ENCODE measurements at regions of chr17 and their contacts with region 1.

Region 1: GRCh38 chr17:7561028-7561575 is 617 bp upstream of the SENP3 start:
- DNase-seq: peak; percentile 96
- H3K4me3 ChIP-seq: peak overlapping the region; percentile 71 to 91 (median 90)
- H3K27ac ChIP-seq: peak overlapping the region; percentile 74 to 98 (median 79)
- H3K4me1 ChIP-seq: peaks cover 40 to 59% of the 10 kb centered on the region in 2 donors
- H3K27me3 ChIP-seq: no peaks in the 10 kb centered on the region
- CTCF ChIP-seq: peak; percentile 72 to 95 (median 83)
- POLR2A ChIP-seq: no peak

Region 2: GRCh38 chr17:7351665-7352501 is 209.2 kb before region 1 on chr17 and contains the start of gene KCTD11:
- intact Hi-C with region 1: loop called (anchors 5 kb)
- DNase-seq: peak; percentile 93 to 94
- H3K4me3 ChIP-seq: peak within 1 kb of the TSS; percentile 43 to 97 (median 80)
- H3K27ac ChIP-seq: peak within 1 kb of the TSS; percentile 89 to 100 (median 97)
- H3K4me1 ChIP-seq: peaks cover 21 to 53% of the 10 kb centered on the region in 2 donors
- H3K27me3 ChIP-seq: no peaks in the 10 kb centered on the region
- CTCF ChIP-seq: peak in 3 of 6 experiments; percentile 30 to 55 (median 39)
- POLR2A ChIP-seq: peak in 1 of 2 donors; percentile 82
- total RNA-seq, gene KCTD11: 6.6 to 20.4 (median 18.7) TPM

Region 3: GRCh38 chr17:7394452-7395191 is 166.5 kb before region 1 on chr17 and contains the start of gene PLSCR3:
- intact Hi-C with region 1: no loop called
- DNase-seq: peak; percentile 86 to 89
- H3K4me3 ChIP-seq: peak within 1 kb of the TSS; percentile 65 to 79 (median 67)
- H3K27ac ChIP-seq: peak within 1 kb of the TSS; percentile 72 to 93 (median 92)
- H3K4me1 ChIP-seq: peaks cover 11 to 18% of the 10 kb centered on the region in 2 donors
- H3K27me3 ChIP-seq: no peaks in the 10 kb centered on the region
- CTCF ChIP-seq: peak in 5 of 6 experiments; percentile 20 to 46 (median 41)
- POLR2A ChIP-seq: peak in 1 of 2 donors; percentile 91
- total RNA-seq, gene PLSCR3: 18.3 to 21.6 (median 19.9) TPM

Region 4: GRCh38 chr17:7435221-7435675 is 125.9 kb before region 1 on chr17 and contains the start of gene TMEM102:
- intact Hi-C with region 1: loop called (anchors 5 kb)
- DNase-seq: peak; percentile 98 to 99
- H3K4me3 ChIP-seq: peak within 1 kb of the TSS; percentile 30 to 53 (median 38)
- H3K27ac ChIP-seq: peak within 1 kb of the TSS; percentile 25 to 64 (median 61)
- H3K4me1 ChIP-seq: peaks cover 31 to 42% of the 10 kb centered on the region in 2 donors
- H3K27me3 ChIP-seq: no peaks in the 10 kb centered on the region
- CTCF ChIP-seq: no peak
- POLR2A ChIP-seq: peak in 1 of 2 donors; percentile 63
- total RNA-seq, gene TMEM102: 11.3 to 19.4 (median 16.4) TPM

Region 5: DNA sequence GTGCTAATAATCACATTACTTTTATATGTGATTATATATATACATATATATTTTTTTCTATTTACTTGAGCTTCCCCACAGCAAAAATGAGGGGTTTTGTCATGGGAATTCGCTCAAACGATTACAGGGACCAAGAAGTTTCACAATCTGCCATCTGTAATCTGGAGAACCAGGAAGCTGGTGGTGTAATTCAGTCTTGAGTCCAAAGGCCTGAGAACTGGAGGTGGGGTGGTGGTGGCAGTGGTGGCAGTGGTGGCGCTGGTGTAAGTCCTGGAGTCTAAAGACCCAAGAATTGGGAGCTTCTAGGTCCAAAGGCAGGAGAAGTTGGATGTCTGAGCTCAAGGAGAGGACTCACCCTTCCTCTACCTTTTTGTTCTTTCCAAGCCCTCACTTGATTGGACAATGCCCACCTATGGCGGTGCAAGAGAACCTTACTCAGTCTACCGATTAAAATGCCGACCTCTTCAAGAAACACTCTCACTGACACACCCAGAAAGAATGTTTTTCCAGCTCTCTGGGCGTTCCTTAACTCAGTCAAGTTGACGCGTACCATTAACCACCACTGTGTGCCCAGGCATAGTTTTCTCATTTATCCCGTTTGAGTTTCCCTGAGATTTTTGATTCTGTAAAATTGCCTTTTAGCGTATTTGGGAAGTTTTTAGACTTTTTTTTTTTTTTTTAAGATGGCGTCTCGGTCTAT is 45.0 kb before region 1 on chr17:
- intact Hi-C with region 1: loop called (anchors 2 kb)
- DNase-seq: no peak
- H3K4me3 ChIP-seq: no peak overlapping the region
- H3K27ac ChIP-seq: no peak overlapping the region
- H3K4me1 ChIP-seq: no peaks in the 10 kb centered on the region
- H3K27me3 ChIP-seq: no peaks in the 10 kb centered on the region
- CTCF ChIP-seq: no peak
- POLR2A ChIP-seq: no peak

Region 6: DNA sequence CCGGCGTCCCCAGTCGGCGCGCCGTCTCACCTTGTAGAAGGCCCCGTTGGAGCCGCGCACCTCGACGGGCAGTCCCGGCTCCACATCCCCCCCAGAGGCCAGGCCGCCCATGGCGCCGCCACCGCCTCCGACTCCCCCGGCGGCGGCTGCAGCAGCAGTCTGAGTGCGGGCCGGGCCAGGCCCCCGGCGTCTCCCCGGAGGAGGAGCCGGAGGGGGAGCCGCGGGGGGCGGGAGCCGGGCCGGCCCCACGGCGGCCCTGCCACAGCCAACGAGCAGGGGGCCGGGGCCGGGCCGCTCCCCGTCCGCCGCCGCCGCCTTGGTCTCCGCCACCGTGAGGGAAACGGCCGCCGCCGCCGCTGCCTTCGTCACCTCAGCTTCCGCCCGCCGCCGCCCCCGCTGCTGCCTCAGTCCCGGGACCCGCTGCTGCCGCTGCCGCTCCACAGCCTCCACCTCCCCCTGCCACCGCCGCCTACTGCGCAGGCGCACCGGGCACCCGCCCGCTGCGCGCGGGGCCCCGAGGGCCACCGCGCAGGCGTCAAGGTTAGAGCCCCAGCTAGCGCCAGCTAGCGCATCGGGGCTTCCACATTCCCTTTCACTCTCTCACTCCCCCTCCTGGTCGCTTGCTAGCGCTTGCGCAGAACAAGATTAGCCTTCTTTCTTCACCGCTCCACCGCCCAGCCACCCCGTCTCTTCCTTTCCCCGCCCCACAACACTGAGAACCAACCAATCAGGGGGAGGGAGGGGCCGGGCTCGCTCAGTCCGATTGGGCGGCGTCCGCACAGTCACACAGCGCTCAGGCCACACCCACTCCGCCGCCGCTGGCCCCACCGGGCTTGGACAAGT is 53.5 kb after region 1 on chr17 and contains the start of gene FXR2:
- intact Hi-C with region 1: no loop called
- DNase-seq: peak; percentile 100
- H3K4me3 ChIP-seq: peak within 1 kb of the TSS; percentile 16 to 85 (median 78)
- H3K27ac ChIP-seq: peak within 1 kb of the TSS; percentile 80 to 89 (median 80)
- H3K4me1 ChIP-seq: peaks cover 26 to 30% of the 10 kb centered on the region in 2 donors
- H3K27me3 ChIP-seq: no peaks in the 10 kb centered on the region
- CTCF ChIP-seq: peak; percentile 20 to 67 (median 48)
- POLR2A ChIP-seq: peak in 1 of 2 donors; percentile 90
- total RNA-seq, gene FXR2: 27.6 to 37.5 (median 28.6) TPM

Measured in thyroid gland (tissue), 4 donors.